CD4-positive, alpha-beta T cell (primary cell): ENCODE measurements at regions of chr6 and their contacts with region 1.

Region 1: DNA sequence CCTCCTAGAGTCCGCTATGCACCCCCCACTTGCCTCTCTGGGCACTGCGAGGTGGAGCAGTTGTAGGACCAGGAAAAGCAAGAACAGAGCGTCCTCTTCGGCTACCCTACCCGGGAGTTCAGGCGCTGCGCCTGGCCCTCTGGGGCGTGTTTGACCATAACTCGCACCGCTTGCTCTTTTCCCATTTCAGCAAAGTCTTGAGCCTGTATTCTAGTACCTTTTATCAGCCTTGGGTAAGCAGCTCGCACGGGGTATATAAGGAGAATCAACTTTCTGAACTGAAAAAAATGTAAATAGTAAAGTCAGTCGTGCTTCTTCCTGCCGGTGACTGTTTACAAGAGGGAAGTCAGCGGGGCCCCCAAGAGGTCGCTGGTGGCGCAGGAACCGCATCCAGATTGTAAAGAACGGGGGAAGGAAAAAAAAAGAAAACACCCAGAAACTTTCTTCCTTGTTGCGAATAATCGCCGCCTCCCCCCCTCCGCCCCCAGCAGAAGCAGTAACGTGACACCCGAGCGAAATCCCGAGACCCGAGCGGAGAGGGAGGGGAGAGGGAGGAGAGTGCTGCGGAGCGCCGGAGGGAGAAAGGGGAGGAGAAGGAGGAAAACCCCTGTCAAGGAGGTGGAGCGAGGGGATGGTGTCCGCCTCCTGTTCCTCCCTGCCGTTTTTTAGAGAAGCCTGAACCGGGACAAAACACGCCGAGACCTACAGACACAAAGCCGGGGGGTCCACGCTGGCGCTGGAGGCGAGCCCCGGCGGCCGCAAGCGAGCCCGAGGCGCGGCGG is at the start of gene UST:
- DNase-seq: peak; percentile 36 to 88 (median 52)
- ATAC-seq: peak; percentile 55
- H3K4me3 ChIP-seq: peak within 1 kb of the TSS; percentile 64
- H3K4me3 Mint-ChIP-seq: peak within 1 kb of the TSS; percentile 99
- H3K27ac ChIP-seq: peak within 1 kb of the TSS; percentile 29 to 51
- H3K27ac Mint-ChIP-seq: peak within 1 kb of the TSS; percentile 88
- H3K4me1 ChIP-seq: peaks cover 31% of the 10 kb centered on the region
- H3K4me1 Mint-ChIP-seq: peaks cover 36% of the 10 kb centered on the region
- H3K27me3 ChIP-seq: peaks cover 0 to 12% of the 10 kb centered on the region in 2 experiments
- H3K27me3 Mint-ChIP-seq: peaks cover 32% of the 10 kb centered on the region
- CTCF ChIP-seq: peak; percentile 66
- total RNA-seq, gene UST: 1.9 to 3.7 TPM

Region 2: DNA sequence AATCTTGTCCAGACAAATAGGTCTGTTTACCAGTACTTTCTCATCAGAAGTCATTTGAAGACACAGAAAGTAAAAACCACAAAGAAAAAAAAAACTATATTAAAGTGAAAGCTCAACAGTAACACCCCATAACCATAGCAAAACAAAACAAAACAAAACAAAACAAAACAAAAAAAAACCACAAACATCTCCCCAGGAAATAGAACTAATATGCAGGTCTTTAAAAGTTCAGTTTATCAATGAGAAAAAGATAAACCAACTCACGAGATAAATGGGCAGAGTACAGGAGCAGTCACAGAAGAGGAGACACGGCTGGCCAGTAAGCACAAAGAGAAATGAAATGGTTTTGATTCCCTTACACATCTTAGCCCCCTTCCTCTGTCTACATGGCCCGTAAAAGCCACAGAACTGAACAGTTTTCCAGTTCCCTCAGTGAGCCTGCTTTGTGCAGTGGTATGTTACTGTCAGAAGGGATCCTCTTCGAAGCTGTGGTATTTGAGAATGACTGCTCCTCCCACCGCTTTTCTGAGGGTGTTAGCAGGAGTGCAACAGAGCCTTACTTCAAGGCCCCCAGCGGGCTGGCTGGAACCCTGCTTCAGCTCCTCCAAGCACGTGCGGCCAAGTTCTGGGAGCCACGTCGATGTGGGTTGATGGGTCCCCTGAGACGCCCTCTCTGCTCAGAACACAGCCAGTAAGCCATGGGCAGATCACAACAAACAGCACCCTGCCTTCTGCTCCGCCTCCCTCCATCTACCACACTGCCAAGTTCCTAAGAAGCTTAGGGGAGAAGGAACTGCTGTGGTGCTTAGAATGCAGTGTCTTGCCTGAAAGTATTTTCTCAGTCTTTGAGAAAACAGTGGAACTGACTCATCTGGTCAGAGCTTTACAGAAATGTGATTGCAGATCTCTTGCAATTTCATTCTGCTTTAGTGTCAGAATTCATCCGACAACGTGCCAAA is 14.3 kb after region 1 on chr6:
- CTCF ChIA-PET with region 1: interaction called, 10 read pairs
- POLR2A ChIA-PET with region 1: interaction called, 22 read pairs
- intact Hi-C with region 1: loop called in 1 of 2 experiments (anchors 2 kb)
- DNase-seq: peak in 12 of 14 experiments; percentile 11 to 77 (median 36)
- ATAC-seq: peak; percentile 62
- H3K4me3 ChIP-seq: peak overlapping the region; percentile 51
- H3K4me3 Mint-ChIP-seq: peak overlapping the region; percentile 63
- H3K27ac ChIP-seq: peak overlapping the region; percentile 78 to 95
- H3K27ac Mint-ChIP-seq: peak overlapping the region; percentile 84
- H3K4me1 ChIP-seq: peaks cover 41% of the 10 kb centered on the region
- H3K4me1 Mint-ChIP-seq: peaks cover 64% of the 10 kb centered on the region
- H3K27me3 ChIP-seq: no peaks in the 10 kb centered on the region
- H3K27me3 Mint-ChIP-seq: no peaks in the 10 kb centered on the region
- CTCF ChIP-seq: no peak

Region 3: DNA sequence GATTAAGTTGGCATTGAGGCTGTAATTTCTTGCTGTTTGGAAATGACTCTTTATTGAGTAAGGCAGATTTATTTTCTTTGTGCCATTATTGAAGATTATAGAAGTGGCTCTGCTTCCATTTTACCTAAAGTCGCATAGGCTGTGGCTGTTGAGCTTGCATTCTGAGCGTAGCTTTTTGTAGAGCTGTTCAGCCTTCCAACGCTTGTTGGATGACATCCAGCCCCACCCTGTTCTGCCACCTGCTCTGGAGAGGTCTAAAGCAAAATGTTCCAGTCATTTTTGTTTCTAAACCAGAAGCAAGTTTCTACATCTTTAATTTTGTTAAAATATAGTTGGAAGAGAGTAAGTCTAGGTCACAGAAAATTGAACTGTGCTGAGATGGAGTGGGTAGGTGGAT is 24.6 kb after region 1 on chr6:
- CTCF ChIA-PET with region 1: no interaction called
- POLR2A ChIA-PET with region 1: interaction called, 13 read pairs
- intact Hi-C with region 1: no loop called
- DNase-seq: no peak
- ATAC-seq: peak; percentile 69
- H3K4me3 ChIP-seq: no peak overlapping the region
- H3K4me3 Mint-ChIP-seq: peak overlapping the region; percentile 32
- H3K27ac ChIP-seq: no peak overlapping the region
- H3K27ac Mint-ChIP-seq: peak overlapping the region; percentile 18
- H3K4me1 ChIP-seq: peaks cover 26% of the 10 kb centered on the region
- H3K4me1 Mint-ChIP-seq: peaks cover 38% of the 10 kb centered on the region
- H3K27me3 ChIP-seq: no peaks in the 10 kb centered on the region
- H3K27me3 Mint-ChIP-seq: no peaks in the 10 kb centered on the region
- CTCF ChIP-seq: no peak

Region 4: DNA sequence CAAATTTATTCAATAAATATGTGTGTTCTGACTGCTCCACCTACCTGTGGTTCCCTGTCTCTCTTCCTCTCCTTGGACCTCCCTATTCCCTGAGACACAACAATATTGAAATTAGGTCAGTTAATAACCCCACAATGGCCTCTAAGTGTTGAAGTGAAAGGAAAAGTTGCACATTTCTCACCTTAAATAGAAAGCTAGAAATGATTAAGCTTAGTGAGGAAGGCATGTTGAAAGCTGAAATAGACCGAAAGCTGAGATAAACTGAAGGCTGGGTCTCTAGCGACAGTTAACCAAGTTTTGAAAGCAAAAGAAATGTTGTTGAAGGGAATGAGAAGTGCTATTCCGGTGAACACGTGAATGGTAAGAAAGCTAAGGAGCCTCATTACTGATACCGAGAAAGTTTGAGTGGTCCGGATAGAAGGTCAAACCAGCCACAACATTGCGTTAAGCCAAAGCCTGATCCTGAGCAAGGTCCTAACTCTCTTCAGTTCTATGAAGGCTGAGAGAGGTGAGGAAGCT is 34.4 kb after region 1 on chr6:
- CTCF ChIA-PET with region 1: no interaction called
- POLR2A ChIA-PET with region 1: interaction called, 10 read pairs
- intact Hi-C with region 1: no loop called
- DNase-seq: peak in 2 of 14 experiments; percentile 17 to 42
- ATAC-seq: peak; percentile 34
- H3K4me3 ChIP-seq: peak overlapping the region; percentile 31
- H3K4me3 Mint-ChIP-seq: peak overlapping the region; percentile 58
- H3K27ac ChIP-seq: peak overlapping the region in 1 of 2 donors; percentile 30
- H3K27ac Mint-ChIP-seq: peak overlapping the region; percentile 27
- H3K4me1 ChIP-seq: peaks cover 9% of the 10 kb centered on the region
- H3K4me1 Mint-ChIP-seq: peaks cover 16% of the 10 kb centered on the region
- H3K27me3 ChIP-seq: no peaks in the 10 kb centered on the region
- H3K27me3 Mint-ChIP-seq: no peaks in the 10 kb centered on the region
- CTCF ChIP-seq: no peak

Region 5: DNA sequence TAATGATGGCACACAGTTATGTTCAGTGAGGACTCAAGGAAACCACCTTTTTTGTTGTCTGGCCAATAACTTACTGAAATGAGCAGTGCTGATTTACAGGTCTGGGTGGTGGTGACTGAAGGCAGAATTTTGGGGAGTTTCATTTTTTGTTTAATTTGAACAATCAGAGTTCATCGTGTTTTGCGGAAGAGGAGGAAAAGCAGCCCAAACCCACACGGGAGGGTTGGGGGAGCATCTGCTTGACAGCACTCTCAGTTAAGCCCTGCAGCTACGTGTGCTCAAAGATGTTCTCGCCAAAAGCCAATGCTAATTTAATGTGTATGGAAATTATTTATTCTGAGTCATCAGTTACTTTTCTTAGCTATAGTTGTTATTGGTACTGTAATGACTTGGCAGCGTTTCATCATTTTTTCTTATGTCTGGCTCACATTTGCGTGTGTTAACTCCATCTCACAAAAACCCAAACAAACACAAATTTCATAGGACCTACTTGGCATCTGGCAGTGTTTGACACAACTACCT is 89.4 kb after region 1 on chr6:
- CTCF ChIA-PET with region 1: no interaction called
- POLR2A ChIA-PET with region 1: interaction called, 3 read pairs
- intact Hi-C with region 1: loop called in 1 of 2 experiments (anchors 5 kb)
- DNase-seq: peak in 4 of 14 experiments; percentile 4 to 16 (median 14)
- ATAC-seq: peak; percentile 39
- H3K4me3 ChIP-seq: no peak overlapping the region
- H3K4me3 Mint-ChIP-seq: peak overlapping the region; percentile 55
- H3K27ac ChIP-seq: no peak overlapping the region
- H3K27ac Mint-ChIP-seq: peak overlapping the region; percentile 43
- H3K4me1 ChIP-seq: peaks cover 4% of the 10 kb centered on the region
- H3K4me1 Mint-ChIP-seq: peaks cover 17% of the 10 kb centered on the region
- H3K27me3 ChIP-seq: no peaks in the 10 kb centered on the region
- H3K27me3 Mint-ChIP-seq: no peaks in the 10 kb centered on the region
- CTCF ChIP-seq: no peak

Region 6: GRCh38 chr6:148947621-148948444 is 201.3 kb after region 1 on chr6:
- CTCF ChIA-PET with region 1: no interaction called
- POLR2A ChIA-PET with region 1: no interaction called
- intact Hi-C with region 1: loop called (anchors 1 kb)
- DNase-seq: peak; percentile 64 to 87 (median 73)
- ATAC-seq: peak; percentile 81
- H3K4me3 ChIP-seq: no peak overlapping the region
- H3K4me3 Mint-ChIP-seq: no peak overlapping the region
- H3K27ac ChIP-seq: no peak overlapping the region
- H3K27ac Mint-ChIP-seq: no peak overlapping the region
- H3K4me1 ChIP-seq: peaks cover 2% of the 10 kb centered on the region
- H3K4me1 Mint-ChIP-seq: no peaks in the 10 kb centered on the region
- H3K27me3 ChIP-seq: no peaks in the 10 kb centered on the region
- H3K27me3 Mint-ChIP-seq: peaks cover 4% of the 10 kb centered on the region
- CTCF ChIP-seq: peak; percentile 94